PC-9 (cell line): ENCODE measurements at regions of chr4 and their contacts with region 1.

Region 1: GRCh38 chr4:1693129-1693896 is 9.2 kb upstream of the FAM53A start:
- DNase-seq: peak; percentile 60 to 76
- H3K4me3 ChIP-seq: no peak overlapping the region
- H3K27ac ChIP-seq: no peak overlapping the region; the same call in 1 of the 2 replicates
- H3K4me1 ChIP-seq: no peaks in the 10 kb centered on the region
- H3K27me3 ChIP-seq: no peaks in the 10 kb centered on the region
- CTCF ChIP-seq: peak; percentile 93

Region 2: GRCh38 chr4:924107-925096 is 768.9 kb before region 1 on chr4:
- CTCF ChIA-PET with region 1: interaction called, 14 read pairs
- POLR2A ChIA-PET with region 1: no interaction called
- intact Hi-C with region 1: no loop called
- DNase-seq: no peak
- H3K4me3 ChIP-seq: no peak overlapping the region
- H3K27ac ChIP-seq: no peak overlapping the region
- H3K4me1 ChIP-seq: peaks cover 4% of the 10 kb centered on the region; the same call in 1 of the 2 replicates
- H3K27me3 ChIP-seq: no peaks in the 10 kb centered on the region
- CTCF ChIP-seq: no peak